ENCODE measurements at regions of chr17 and their contacts with region 1.

Region 1: DNA sequence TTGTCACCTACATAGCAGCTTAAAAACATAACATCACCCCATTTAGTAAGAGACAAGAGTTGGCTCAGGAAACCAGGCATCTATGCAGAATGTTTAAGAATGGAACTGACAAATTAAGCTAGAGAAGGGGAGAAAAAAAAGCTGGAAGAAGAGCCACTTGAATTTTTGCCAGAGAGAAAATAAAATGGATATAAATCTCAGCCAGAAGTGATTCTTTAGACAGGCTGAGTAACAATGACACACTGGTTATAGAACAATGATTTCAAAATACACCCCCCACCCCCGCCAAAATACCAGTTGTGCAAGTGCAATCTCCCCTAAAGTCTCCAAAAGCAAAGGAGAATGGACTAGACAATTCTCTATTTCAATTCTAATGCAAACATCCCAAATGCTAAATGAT is 22.4 kb downstream of the LSM12 start:
- DNase-seq: no peak
- H3K4me3 ChIP-seq: no peak overlapping the region
- H3K27ac ChIP-seq: 0 out of 4 replicates have a peak overlapping the region, but pooled peaks of 1 of the 2 experiments have one; percentile 5
- H3K4me1 ChIP-seq: peaks cover 0 to 7% of the 10 kb centered on the region in 2 experiments; a peak in 2 of 4 replicates
- H3K27me3 ChIP-seq: no peaks in the 10 kb centered on the region
- CTCF ChIP-seq: no peak
- EP300 ChIP-seq: no peak
- RAD21 ChIP-seq: no peak

Region 2: GRCh38 chr17:43940630-43941029 is 103.4 kb before region 1 on chr17:
- CTCF ChIA-PET with region 1: interaction called, 24 read pairs
- POLR2A ChIA-PET with region 1: no interaction called
- DNase-seq: peak; percentile 81
- H3K4me3 ChIP-seq: no peak overlapping the region
- H3K27ac ChIP-seq: no peak overlapping the region
- H3K4me1 ChIP-seq: peaks cover 0 to 7% of the 10 kb centered on the region in 2 experiments; a peak in 1 of 4 replicates
- H3K27me3 ChIP-seq: no peaks in the 10 kb centered on the region
- CTCF ChIP-seq: peak; percentile 58
- EP300 ChIP-seq: no peak
- RAD21 ChIP-seq: peak; percentile 75

Region 3: GRCh38 chr17:44006598-44007345 is 37.3 kb before region 1 on chr17:
- CTCF ChIA-PET with region 1: interaction called, 52 read pairs
- POLR2A ChIA-PET with region 1: interaction called, 4 read pairs
- DNase-seq: peak; percentile 98
- H3K4me3 ChIP-seq: peak overlapping the region; percentile 80 to 90
- H3K27ac ChIP-seq: peak overlapping the region; percentile 57 to 62; a peak in 3 of 4 replicates
- H3K4me1 ChIP-seq: peaks cover 8 to 47% of the 10 kb centered on the region in 2 experiments; a peak in 2 of 4 replicates
- H3K27me3 ChIP-seq: no peaks in the 10 kb centered on the region
- CTCF ChIP-seq: peak; percentile 69
- EP300 ChIP-seq: no peak
- RAD21 ChIP-seq: peak; percentile 63

Region 4: GRCh38 chr17:44024271-44024663 is 19.8 kb before region 1 on chr17:
- CTCF ChIA-PET with region 1: interaction called, 26 read pairs
- POLR2A ChIA-PET with region 1: no interaction called
- DNase-seq: peak; percentile 68
- H3K4me3 ChIP-seq: no peak overlapping the region
- H3K27ac ChIP-seq: peak overlapping the region in 1 of 2 experiments; percentile 92; a peak in 2 of 4 replicates
- H3K4me1 ChIP-seq: peaks cover 0 to 32% of the 10 kb centered on the region in 2 experiments; a peak in 2 of 4 replicates
- H3K27me3 ChIP-seq: no peaks in the 10 kb centered on the region
- CTCF ChIP-seq: no peak
- EP300 ChIP-seq: peak in 1 of 2 experiments; percentile 74; a peak in 2 of 4 replicates
- RAD21 ChIP-seq: no peak

Region 5: DNA sequence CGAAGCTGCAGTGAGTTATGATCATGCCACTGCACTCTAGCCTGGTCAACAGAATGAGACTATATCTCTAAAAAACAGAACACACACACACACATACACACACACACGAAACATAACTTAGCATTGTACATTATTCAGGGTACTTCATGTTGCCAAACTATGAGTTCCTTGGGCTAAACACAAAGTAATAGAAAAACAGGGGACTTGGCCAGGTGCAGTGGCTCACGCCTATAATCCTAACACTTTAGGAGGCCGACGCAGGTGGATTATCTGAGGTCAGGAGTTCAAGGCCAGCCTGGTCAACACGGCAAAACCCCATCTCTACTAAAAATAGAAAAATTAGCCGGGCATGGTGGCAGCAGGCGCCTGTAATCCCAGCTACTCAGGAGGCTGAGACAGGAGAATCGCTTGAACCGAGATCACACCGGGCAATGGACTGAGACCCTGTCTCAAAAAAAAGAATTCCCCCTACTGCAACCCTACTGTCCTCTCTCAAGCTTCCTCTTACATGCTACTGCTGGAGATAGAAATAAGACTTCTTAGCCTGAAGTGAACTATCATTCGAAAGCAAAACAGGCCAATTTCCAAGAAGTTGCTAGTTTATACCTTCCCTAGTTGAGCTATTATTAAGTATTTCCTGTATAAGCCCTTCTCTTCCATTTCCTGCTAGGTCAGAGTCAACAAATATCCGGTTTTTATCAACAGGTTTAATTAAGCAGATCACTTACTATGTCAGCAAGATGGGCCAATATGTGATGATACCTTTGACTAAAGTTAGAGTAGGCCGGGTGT is 15.2 kb after region 1 on chr17:
- CTCF ChIA-PET with region 1: interaction called, 15 read pairs
- POLR2A ChIA-PET with region 1: interaction called, 3 read pairs
- DNase-seq: no peak
- H3K4me3 ChIP-seq: no peak overlapping the region
- H3K27ac ChIP-seq: no peak overlapping the region
- H3K4me1 ChIP-seq: 0 out of 4 replicates have a peak, but pooled peaks cover 0 to 7% of the 10 kb centered on the region in 2 experiments
- H3K27me3 ChIP-seq: no peaks in the 10 kb centered on the region
- CTCF ChIP-seq: no peak
- EP300 ChIP-seq: no peak
- RAD21 ChIP-seq: no peak

Region 6: GRCh38 chr17:44095642-44096496 is 51.8 kb after region 1 on chr17:
- CTCF ChIA-PET with region 1: no interaction called
- POLR2A ChIA-PET with region 1: no interaction called
- DNase-seq: peak; percentile 85
- H3K4me3 ChIP-seq: peak overlapping the region; percentile 13 to 37; a peak in 1 of 4 replicates
- H3K27ac ChIP-seq: peak overlapping the region; percentile 87 to 92
- H3K4me1 ChIP-seq: peaks cover 11 to 14% of the 10 kb centered on the region in 2 experiments; a peak in 3 of 4 replicates
- H3K27me3 ChIP-seq: no peaks in the 10 kb centered on the region
- CTCF ChIP-seq: peak; percentile 33; the same call in 1 of the 2 replicates
- EP300 ChIP-seq: no peak
- RAD21 ChIP-seq: peak; percentile 37

Region 7: DNA sequence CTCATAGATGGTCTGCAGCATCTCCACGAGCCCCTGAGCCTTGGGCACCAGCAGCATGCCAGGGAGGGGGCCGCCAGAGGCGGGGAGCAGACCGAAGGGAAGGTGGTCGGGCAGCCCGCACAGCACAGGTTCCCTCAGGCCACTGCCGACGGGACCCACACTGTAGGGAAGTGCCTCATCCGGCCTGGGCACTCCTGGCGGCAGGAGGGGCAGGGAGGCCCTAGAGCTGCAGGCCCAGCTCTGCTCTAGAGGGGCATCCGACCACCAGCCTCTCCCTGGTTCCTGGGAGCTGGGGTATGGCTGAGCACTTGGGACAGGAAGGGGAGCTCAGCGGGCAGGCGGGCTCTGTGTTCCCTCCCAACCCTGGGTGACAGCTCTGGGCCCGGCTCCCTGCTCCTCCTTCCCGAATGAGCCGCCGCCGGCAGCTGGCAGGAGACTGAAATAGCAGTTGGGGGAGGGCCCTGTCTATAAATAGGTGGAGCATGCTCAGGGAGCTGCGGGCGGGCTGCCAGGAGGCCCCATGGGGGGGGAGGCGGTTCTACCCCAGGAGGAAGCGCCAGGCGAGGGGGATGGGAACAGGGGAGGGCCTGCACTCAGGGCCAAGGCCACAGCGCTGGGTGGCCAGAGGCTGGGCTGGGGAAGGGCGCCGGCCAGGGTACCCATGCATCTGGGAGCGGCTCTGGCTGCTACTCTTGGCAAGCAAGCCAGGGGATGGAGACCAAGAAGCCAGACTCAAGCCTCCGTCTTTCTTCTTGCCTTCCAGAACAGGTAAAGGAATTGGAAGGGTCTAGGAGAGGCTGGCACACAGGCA is 67.0 kb after region 1 on chr17:
- CTCF ChIA-PET with region 1: interaction called, 10 read pairs
- POLR2A ChIA-PET with region 1: no interaction called
- DNase-seq: peak; percentile 96
- H3K4me3 ChIP-seq: peak overlapping the region; percentile 39 to 59
- H3K27ac ChIP-seq: peak overlapping the region; percentile 86 to 97
- H3K4me1 ChIP-seq: peaks cover 36 to 51% of the 10 kb centered on the region in 2 experiments
- H3K27me3 ChIP-seq: no peaks in the 10 kb centered on the region
- CTCF ChIP-seq: no peak
- EP300 ChIP-seq: peak in 1 of 2 experiments; percentile 71; a peak in 2 of 4 replicates
- RAD21 ChIP-seq: no peak

Region 8: DNA sequence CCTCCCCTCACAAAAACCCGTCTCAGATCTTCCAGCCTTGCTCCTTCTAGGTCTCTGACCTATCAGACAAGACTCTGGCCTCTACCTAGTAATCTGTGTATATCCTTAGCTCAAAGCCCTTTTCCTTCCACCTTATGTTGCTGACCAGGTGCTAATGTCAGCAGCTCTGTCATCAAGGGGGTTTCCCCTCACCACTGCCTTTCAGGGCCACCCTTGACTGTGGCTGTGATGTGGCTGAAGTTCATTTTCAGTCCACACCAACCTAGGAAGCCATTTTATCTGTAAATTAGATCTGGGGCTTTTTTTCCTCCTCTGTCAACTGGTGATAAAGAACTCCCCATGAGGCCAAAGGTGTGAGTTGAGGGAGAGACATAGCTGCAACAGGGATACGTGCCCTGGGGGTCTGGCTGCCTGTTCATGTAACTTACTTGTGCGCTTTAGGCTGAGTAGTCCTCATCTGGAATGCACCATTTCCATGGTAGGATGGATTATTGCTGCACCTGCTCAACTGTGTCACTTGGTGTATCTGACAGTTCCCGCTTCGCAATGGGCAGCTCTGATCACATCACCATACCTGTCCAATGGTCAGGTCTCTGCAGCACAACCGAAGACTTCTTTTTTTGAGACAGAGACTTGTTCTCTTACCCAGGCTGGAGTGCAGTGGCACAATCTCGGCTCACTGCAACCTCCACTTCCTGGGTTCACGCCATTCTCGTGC is 249.6 kb after region 1 on chr17:
- CTCF ChIA-PET with region 1: no interaction called
- POLR2A ChIA-PET with region 1: no interaction called
- DNase-seq: no peak
- H3K4me3 ChIP-seq: no peak overlapping the region
- H3K27ac ChIP-seq: no peak overlapping the region
- H3K4me1 ChIP-seq: no peaks in the 10 kb centered on the region
- H3K27me3 ChIP-seq: peaks cover 17% of the 10 kb centered on the region; the same call in 1 of the 2 replicates
- CTCF ChIP-seq: no peak
- EP300 ChIP-seq: no peak
- RAD21 ChIP-seq: no peak

Measured in SK-N-SH (cell line).